ENCODE measurements at regions of chr11 and their contacts with region 1.

Region 1: DNA sequence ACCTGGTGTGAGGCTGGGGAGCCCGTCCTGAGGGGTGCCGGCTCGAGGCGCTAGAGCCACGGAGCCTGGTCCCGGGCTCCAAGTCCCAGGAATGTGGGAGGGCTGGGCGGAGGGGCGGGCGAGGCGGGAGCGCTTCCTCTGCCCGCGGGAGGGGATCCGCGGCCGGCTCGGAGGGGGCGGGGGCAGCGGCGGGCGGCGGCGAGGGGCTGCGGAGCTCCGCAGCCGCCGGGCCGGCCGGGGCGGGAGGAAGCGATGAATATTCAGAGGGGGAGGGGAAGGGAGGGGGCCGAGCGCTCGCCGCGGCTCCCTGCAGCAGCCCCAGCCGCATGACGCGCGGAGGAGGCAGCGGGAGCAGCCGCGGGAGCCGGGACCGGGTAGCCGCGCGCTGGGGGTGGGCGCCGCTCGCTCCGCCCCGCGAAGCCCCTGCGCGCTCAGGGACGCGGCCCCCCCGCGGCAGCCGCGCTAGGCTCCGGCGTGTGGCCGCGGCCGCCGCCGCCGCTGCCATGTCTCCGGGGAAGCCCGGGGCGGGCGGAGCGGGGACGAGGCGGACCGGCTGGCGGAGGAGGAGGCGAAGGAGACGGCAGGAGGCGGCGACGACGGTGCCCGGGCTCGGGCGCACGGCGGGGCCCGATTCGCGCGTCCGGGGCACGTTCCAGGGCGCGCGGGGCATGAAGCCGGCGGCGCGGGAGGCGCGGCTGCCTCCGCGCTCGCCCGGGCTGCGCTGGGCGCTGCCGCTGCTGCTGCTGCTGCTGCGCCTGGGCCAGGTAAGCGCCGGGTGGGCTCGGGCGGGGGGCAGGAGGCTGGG is at the start of gene PTPRJ:
- DNase-seq: no peak
- H3K4me3 ChIP-seq: peak within 1 kb of the TSS; percentile 77
- CTCF ChIP-seq: no peak

Region 2: DNA sequence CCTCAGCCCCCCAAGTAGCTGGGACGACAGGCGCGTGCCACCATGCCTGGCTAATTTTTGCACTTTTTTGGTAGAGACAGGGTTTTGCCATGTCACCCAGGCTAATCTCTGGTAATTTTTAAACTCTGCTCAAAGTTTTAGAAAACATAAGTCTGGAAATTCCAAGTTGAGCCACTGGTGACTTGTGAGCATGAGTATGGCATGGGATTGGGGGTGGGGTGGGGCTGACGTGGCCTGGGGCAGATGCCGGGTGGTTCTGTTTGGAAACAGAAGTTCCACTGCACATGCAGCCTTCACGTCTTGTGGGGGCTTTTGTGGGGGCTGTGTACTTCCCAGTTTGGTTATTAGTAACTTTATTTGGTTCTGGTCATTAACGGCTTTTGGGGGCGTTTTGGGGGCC is 67.2 kb after region 1 on chr11:
- in situ Hi-C with region 1: loop called (anchors 5 kb)
- DNase-seq: no peak
- H3K4me3 ChIP-seq: no peak overlapping the region
- CTCF ChIP-seq: no peak